ENCODE measurements at regions of chr6 and their contacts with region 1.

Region 1: GRCh38 chr6:81752138-81752920 is at the start of gene TENT5A:
- DNase-seq: peak; percentile 95
- H3K4me3 Mint-ChIP-seq: peak within 1 kb of the TSS; percentile 89
- H3K27ac Mint-ChIP-seq: peak within 1 kb of the TSS; percentile 74
- H3K4me1 Mint-ChIP-seq: peaks cover 21% of the 10 kb centered on the region
- H3K27me3 Mint-ChIP-seq: peaks cover 60% of the 10 kb centered on the region
- total RNA-seq, gene TENT5A: 0.30 and 0.90 TPM in 2 replicates

Region 2: GRCh38 chr6:79949233-79949632 is 1803.1 kb before region 1 on chr6:
- intact Hi-C with region 1: loop called (anchors 2 kb)
- DNase-seq: peak; percentile 89
- H3K4me3 Mint-ChIP-seq: no peak overlapping the region
- H3K27ac Mint-ChIP-seq: no peak overlapping the region
- H3K4me1 Mint-ChIP-seq: peaks cover 18% of the 10 kb centered on the region
- H3K27me3 Mint-ChIP-seq: peaks cover 45% of the 10 kb centered on the region

Region 3: DNA sequence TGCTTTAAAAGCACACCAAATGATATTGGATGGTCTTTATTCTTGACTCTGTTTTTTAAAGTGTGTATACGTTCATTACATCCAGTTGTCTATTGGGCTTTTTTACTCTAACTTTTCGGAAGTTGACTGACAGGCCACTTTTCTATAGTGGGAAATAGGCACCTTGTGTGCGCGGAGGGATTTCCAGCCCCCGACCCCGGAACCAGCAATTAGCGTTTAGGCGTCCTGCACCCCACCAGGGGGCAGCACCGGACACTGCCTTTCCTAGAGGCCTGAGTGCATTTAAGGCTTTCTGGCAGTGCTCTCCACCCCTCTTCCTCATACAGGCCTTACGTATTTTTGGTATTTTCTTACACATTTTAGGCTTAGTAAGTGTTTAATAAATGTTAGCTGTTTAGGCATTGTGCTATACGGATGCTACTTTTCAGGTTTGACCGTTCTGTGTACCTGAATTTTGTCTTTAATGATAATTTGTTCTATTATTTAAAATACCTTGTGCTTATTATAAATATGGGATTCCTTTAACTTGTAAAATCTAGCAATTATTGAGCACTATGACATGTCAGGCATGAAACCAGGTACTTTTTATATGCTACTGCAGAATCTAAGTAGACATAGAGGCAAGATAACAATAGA is 1414.0 kb before region 1 on chr6:
- intact Hi-C with region 1: loop called (anchors 1 kb)
- DNase-seq: peak; percentile 87
- H3K4me3 Mint-ChIP-seq: no peak overlapping the region
- H3K27ac Mint-ChIP-seq: no peak overlapping the region
- H3K4me1 Mint-ChIP-seq: no peaks in the 10 kb centered on the region
- H3K27me3 Mint-ChIP-seq: peaks cover 2% of the 10 kb centered on the region

Region 4: DNA sequence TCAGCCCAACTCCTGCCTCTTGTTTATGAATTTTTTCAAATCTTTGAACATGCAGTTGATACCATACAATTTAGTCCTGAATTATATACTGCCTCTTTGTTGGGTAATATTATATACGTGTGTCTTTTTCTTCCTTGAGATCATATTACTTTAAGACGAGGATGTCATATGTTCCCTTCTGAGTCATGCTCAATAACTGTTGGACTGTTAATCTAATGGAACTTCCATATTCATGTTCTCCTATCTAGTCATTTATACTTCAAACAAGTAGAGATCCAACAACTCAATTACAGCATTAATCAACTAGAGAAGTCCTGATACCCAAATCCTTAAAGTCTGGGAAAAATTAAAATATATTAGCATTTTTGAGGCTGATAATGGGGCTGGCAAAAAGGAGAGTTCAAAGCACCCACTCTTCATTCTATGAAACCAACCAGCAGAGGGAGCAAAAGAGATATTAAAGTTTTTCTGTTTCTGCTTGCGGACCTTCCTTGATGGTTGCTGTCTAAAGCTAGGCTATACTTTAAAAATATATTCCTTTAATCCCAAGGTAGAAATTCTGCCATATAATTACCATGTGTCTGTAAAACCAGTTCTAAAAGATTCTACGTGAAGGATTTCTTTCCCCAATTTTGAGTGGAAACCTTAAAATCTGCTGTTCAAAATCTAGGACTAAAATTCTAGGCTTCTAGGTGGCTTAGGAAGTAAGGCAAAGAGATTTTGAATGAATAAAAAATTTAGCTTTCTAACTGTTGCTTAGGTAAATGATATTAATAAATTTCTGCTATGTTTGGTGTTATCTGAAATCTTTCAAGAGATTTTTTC is 1147.0 kb before region 1 on chr6:
- intact Hi-C with region 1: loop called (anchors 2 kb)
- DNase-seq: no peak
- H3K4me3 Mint-ChIP-seq: no peak overlapping the region
- H3K27ac Mint-ChIP-seq: no peak overlapping the region
- H3K4me1 Mint-ChIP-seq: no peaks in the 10 kb centered on the region
- H3K27me3 Mint-ChIP-seq: no peaks in the 10 kb centered on the region

Region 5: GRCh38 chr6:81865712-81866111 is 113.4 kb after region 1 on chr6:
- intact Hi-C with region 1: no loop called
- DNase-seq: no peak
- H3K4me3 Mint-ChIP-seq: no peak overlapping the region
- H3K27ac Mint-ChIP-seq: no peak overlapping the region
- H3K4me1 Mint-ChIP-seq: no peaks in the 10 kb centered on the region
- H3K27me3 Mint-ChIP-seq: no peaks in the 10 kb centered on the region

Region 6: GRCh38 chr6:82057846-82058554 is 305.7 kb after region 1 on chr6:
- intact Hi-C with region 1: no loop called
- DNase-seq: no peak
- H3K4me3 Mint-ChIP-seq: no peak overlapping the region
- H3K27ac Mint-ChIP-seq: no peak overlapping the region
- H3K4me1 Mint-ChIP-seq: no peaks in the 10 kb centered on the region
- H3K27me3 Mint-ChIP-seq: peaks cover 2% of the 10 kb centered on the region

Region 7: DNA sequence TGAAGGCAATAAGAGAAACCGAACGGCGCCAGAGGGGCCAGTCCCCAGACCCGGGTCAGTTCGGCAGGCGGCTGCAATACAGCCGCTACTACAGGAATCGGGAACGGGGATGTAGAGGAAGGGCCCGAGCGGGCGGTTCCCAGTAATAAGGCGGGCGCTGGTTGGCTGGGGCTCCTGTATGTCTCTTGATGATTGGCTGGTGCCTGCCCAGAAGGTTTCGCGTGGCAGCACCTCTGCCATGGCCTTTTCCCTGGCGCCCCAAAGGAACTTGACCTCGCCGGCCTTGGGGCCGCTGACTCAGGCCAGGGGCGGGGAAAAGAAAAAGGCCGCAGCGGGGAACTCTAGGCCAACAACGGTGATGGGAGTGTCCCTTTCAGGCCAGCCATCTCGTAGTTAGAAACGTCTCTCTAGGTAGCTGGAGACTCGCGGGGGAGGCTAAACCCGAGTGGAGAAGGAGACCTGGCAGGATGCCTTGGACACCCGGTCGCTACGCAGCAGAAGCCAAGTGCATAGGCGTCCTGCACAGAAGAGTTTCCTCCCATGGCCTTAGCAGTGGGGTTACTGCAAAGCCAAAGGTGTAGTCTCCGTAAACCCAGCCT is 495.4 kb after region 1 on chr6 and contains the start of gene IBTK:
- intact Hi-C with region 1: loop called (anchors 5 kb)
- DNase-seq: peak; percentile 98
- H3K4me3 Mint-ChIP-seq: peak within 1 kb of the TSS; percentile 96
- H3K27ac Mint-ChIP-seq: peak within 1 kb of the TSS; percentile 96
- H3K4me1 Mint-ChIP-seq: peaks cover 24% of the 10 kb centered on the region
- H3K27me3 Mint-ChIP-seq: peaks cover 2% of the 10 kb centered on the region
- total RNA-seq, gene IBTK: 37.2 and 37.7 TPM in 2 replicates

Measured in activated CD4-positive, alpha-beta T cell treated with anti-CD3 and anti-CD28 coated beads, Interleukin-2, amount 10 ng/mL, durations not matched to agents 24 days and 14 days (primary cell).